Endothelial cell of umbilical vein (primary cell): ENCODE measurements at regions of chr17 and their contacts with region 1.

Region 1: DNA sequence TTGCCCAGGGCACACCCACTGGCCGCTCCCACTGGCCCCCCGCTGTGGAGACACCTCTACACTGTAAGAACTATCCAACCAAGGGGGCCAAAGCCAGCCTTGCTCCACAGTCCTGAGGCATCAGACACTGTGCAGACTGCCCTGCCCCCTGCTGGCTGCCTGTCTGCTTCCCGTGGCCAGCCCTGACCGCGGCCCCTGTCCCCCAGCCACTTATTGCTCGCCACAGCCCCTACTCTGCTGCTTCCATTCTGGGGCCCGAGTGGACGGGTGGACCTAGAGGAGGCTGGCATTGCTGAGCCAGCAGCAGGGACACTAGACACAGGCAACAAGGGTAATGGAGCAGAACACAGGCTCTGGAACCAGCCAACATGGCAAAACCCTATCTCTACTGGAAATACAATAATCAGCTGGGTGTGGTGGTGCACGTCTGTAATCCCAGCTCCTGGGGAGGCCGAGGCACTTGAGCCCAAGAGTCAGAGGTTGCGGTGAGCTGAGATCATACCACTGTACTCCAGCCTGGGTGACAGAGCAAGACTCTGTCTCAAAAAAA is 19.7 kb upstream of the LRRC37A3 start:
- DNase-seq: peak; percentile 42
- H3K4me3 ChIP-seq: no peak overlapping the region
- H3K27ac ChIP-seq: no peak overlapping the region
- H3K4me1 ChIP-seq: no peaks in the 10 kb centered on the region
- H3K27me3 ChIP-seq: no peaks in the 10 kb centered on the region
- CTCF ChIP-seq: peak; percentile 77 to 91
- POLR2A ChIP-seq: no peak

Region 2: GRCh38 chr17:64781014-64781753 is 157.8 kb before region 1 on chr17:
- CTCF ChIA-PET with region 1: interaction called, 25 read pairs
- POLR2A ChIA-PET with region 1: no interaction called
- dilution Hi-C with region 1: no loop called
- intact Hi-C with region 1: no loop called
- DNase-seq: peak; percentile 51
- H3K4me3 ChIP-seq: peak overlapping the region; percentile 66 to 94 (median 73)
- H3K27ac ChIP-seq: peak overlapping the region; percentile 95
- H3K4me1 ChIP-seq: peaks cover 28% of the 10 kb centered on the region
- H3K27me3 ChIP-seq: no peaks in the 10 kb centered on the region
- CTCF ChIP-seq: no peak
- POLR2A ChIP-seq: peak; percentile 32

Region 3: GRCh38 chr17:64920026-64920418 is 19.0 kb before region 1 on chr17:
- CTCF ChIA-PET with region 1: interaction called, 13 read pairs
- POLR2A ChIA-PET with region 1: no interaction called
- dilution Hi-C with region 1: no loop called
- intact Hi-C with region 1: no loop called
- DNase-seq: no peak
- H3K4me3 ChIP-seq: peak overlapping the region; percentile 49 to 60 (median 50)
- H3K27ac ChIP-seq: no peak overlapping the region
- H3K4me1 ChIP-seq: peaks cover 2% of the 10 kb centered on the region
- H3K27me3 ChIP-seq: no peaks in the 10 kb centered on the region
- CTCF ChIP-seq: no peak
- POLR2A ChIP-seq: no peak

Region 4: DNA sequence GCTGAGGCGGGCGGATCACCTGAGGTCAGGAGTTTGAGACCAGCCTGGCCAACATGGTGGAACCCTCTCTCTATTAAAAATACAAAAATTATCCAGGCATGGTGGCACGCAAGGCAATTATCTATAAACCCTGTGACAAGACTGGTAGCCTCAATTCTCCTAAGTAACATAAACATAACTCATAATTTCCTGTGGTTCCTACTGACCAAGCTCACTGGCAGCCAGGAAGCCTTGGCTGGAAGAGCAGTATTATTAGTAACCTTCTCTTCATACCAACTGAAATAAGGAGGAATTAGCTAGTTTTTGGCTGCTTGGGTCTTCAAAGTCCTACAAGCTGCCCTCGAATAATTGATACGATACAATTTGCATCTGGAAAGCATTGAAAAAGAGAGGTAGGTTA is 11.9 kb after region 1 on chr17:
- CTCF ChIA-PET with region 1: interaction called, 22 read pairs
- POLR2A ChIA-PET with region 1: no interaction called
- dilution Hi-C with region 1: no loop called
- intact Hi-C with region 1: no loop called
- DNase-seq: peak; percentile 51
- H3K4me3 ChIP-seq: no peak overlapping the region
- H3K27ac ChIP-seq: peak overlapping the region; percentile 5
- H3K4me1 ChIP-seq: peaks cover 11% of the 10 kb centered on the region
- H3K27me3 ChIP-seq: no peaks in the 10 kb centered on the region
- CTCF ChIP-seq: no peak
- POLR2A ChIP-seq: no peak